Gastrocnemius medialis (tissue), 4 donors: ENCODE measurements at regions of chr6 and their contacts with region 1.

Region 1: GRCh38 chr6:16964553-16965501 is 137.0 kb upstream of the STMND1 start:
- DNase-seq: peak; percentile 60 to 71
- ATAC-seq: peak; percentile 91 to 95
- H3K4me3 ChIP-seq: no peak overlapping the region
- H3K27ac ChIP-seq: no peak overlapping the region
- H3K4me1 ChIP-seq: peaks cover 4 to 9% of the 10 kb centered on the region in 2 donors
- H3K27me3 ChIP-seq: no peaks in the 10 kb centered on the region
- CTCF ChIP-seq: peak; percentile 83 to 91 (median 90)
- POLR2A ChIP-seq: no peak

Region 2: GRCh38 chr6:16514249-16514648 is 450.6 kb before region 1 on chr6:
- in situ Hi-C with region 1: loop called in 2 of 4 experiments (anchors 25 kb)
- intact Hi-C with region 1: loop called (anchors 10 kb)
- DNase-seq: no peak
- ATAC-seq: peak in 1 of 2 donors; percentile 58
- H3K4me3 ChIP-seq: no peak overlapping the region
- H3K27ac ChIP-seq: no peak overlapping the region
- H3K4me1 ChIP-seq: peaks cover 37% of the 10 kb centered on the region in 2 donors
- H3K27me3 ChIP-seq: no peaks in the 10 kb centered on the region
- CTCF ChIP-seq: peak; percentile 33 to 50 (median 36)
- POLR2A ChIP-seq: no peak

Region 3: GRCh38 chr6:16741112-16742016 is 223.5 kb before region 1 on chr6:
- in situ Hi-C with region 1: no loop called
- intact Hi-C with region 1: loop called (anchors 1 kb)
- DNase-seq: no peak
- ATAC-seq: peak; percentile 55 to 83
- H3K4me3 ChIP-seq: no peak overlapping the region
- H3K27ac ChIP-seq: peak overlapping the region; percentile 69 to 83 (median 80)
- H3K4me1 ChIP-seq: peaks cover 64 to 68% of the 10 kb centered on the region in 2 donors
- H3K27me3 ChIP-seq: no peaks in the 10 kb centered on the region
- CTCF ChIP-seq: no peak
- POLR2A ChIP-seq: peak in 1 of 2 donors; percentile 60

Region 4: DNA sequence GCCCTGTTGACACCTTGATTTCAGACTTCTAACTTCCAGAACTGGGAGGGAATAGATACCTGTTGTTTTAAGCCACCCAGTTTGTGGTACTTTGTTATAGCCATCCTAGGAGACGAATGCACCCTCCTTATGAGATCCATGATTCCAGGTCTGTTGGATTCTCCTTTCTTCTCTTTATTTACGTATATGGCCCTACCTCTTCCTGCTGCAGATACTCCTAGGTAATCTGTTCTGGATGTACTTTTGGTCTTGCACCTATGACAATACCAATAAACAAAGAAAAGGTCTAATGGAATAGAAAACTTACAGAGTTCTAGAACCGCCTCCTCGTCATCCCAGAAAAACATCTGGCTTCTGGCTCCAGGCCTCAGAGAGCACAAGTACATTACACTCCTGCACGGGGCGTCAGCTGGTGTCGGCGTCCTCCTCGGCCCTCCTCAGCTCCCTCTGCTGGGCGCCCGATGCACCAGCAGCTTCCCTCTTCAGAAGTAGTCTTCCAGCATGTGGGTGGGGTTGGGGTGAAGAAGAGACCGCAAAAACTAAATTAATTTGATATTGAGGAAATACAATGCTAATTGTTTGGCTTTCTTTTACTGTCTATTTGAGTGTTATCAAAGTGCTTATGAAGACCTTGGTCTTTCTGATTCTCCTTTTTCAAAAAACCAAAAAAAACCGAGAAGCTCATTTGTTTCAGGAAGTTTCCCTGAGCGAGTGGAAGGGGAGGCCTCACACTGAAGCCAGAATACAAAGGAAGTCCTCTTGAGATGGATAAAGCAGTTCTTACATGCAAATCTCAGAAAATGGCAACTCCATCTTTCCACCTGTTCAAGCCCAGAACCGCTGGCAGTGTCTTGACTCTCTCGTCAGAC is 193.9 kb before region 1 on chr6:
- in situ Hi-C with region 1: loop called in 1 of 4 experiments (anchors 10 kb)
- intact Hi-C with region 1: no loop called
- DNase-seq: peak; percentile 79 to 81
- ATAC-seq: peak; percentile 60 to 69
- H3K4me3 ChIP-seq: no peak overlapping the region
- H3K27ac ChIP-seq: peak overlapping the region; percentile 40 to 47 (median 44)
- H3K4me1 ChIP-seq: peaks cover 27 to 28% of the 10 kb centered on the region in 2 donors
- H3K27me3 ChIP-seq: no peaks in the 10 kb centered on the region
- CTCF ChIP-seq: peak; percentile 91 to 96 (median 94)
- POLR2A ChIP-seq: no peak

Region 5: GRCh38 chr6:16803294-16804200 is 161.3 kb before region 1 on chr6:
- in situ Hi-C with region 1: loop called in 1 of 4 experiments (anchors 25 kb)
- intact Hi-C with region 1: loop called (anchors 10 kb)
- DNase-seq: no peak
- ATAC-seq: no peak
- H3K4me3 ChIP-seq: no peak overlapping the region
- H3K27ac ChIP-seq: no peak overlapping the region
- H3K4me1 ChIP-seq: peaks cover 22 to 25% of the 10 kb centered on the region in 2 donors
- H3K27me3 ChIP-seq: no peaks in the 10 kb centered on the region
- CTCF ChIP-seq: no peak
- POLR2A ChIP-seq: no peak

Region 6: DNA sequence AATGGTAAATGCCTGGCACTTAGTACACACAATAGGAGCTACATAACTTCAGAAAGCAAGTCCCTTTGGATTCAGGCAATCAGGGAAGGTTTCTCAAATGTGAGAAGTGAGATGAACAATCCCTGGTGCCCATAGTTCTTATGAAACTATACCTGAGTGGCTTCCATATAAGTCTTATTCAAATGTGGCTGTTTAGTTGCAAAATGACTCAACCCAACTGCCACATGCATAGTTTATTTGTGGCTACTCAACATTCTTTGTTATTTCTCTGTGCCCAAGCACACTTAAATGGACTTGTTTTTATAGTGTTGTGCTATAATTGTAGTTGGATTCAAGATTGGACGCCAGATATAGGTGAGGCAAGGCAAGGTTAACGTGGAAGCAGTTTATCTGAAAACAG is 109.8 kb before region 1 on chr6:
- in situ Hi-C with region 1: no loop called
- intact Hi-C with region 1: loop called (anchors 5 kb)
- DNase-seq: no peak
- ATAC-seq: no peak
- H3K4me3 ChIP-seq: no peak overlapping the region
- H3K27ac ChIP-seq: no peak overlapping the region
- H3K4me1 ChIP-seq: peaks cover 3 to 11% of the 10 kb centered on the region in 2 donors
- H3K27me3 ChIP-seq: no peaks in the 10 kb centered on the region
- CTCF ChIP-seq: no peak
- POLR2A ChIP-seq: no peak